Heart left ventricle (tissue), 16 donors: ENCODE measurements at regions of chr15 and their contacts with region 1.

Region 1: GRCh38 chr15:77419836-77420609 is at the start of gene PEAK1:
- DNase-seq: peak; percentile 100
- ATAC-seq: peak; percentile 97 to 99 (median 99)
- H3K4me3 ChIP-seq: peak within 1 kb of the TSS; percentile 67 to 95 (median 92)
- H3K27ac ChIP-seq: peak within 1 kb of the TSS; percentile 82 to 98 (median 96)
- H3K4me1 ChIP-seq: peaks cover 6 to 73% (median 57%) of the 10 kb centered on the region in 12 donors
- H3K27me3 ChIP-seq: no peaks in the 10 kb centered on the region
- CTCF ChIP-seq: no peak
- POLR2A ChIP-seq: peak; percentile 4 to 93
- total RNA-seq, gene PEAK1: 52.8 to 139 (median 104) TPM

Region 2: DNA sequence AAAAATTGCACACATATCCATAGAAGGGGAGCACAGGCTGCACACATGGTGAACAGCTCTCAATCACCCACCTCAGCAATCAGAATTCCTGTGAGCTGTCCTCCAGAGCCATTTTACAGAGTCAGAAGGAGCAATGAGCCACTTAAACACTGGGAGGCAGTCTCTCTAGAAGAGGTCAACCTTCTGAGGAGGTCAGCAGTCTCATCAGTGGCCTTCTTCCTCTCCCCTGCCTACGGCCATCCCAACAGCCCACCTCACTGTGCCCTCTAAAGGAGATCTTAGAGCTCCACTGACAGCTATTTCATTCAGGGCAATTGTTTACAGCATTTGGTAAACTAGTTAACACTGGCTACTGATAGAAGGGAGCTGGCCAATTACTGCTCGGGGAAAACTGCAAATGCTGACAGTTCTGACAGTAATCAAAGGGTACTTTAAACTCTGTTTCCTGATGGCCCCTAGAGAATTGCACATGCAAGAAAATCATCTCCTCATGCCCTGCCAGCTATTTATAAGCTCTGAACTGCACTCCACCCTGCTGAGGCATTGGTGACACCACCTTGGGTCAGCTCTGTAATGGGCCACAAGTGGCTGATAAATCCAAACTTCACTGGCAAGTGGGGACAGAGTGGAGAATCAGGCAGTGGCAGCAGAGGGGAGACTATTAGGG is 307.1 kb before region 1 on chr15:
- intact Hi-C with region 1: loop called in 2 of 10 experiments (anchors 5 to 10 kb)
- DNase-seq: no peak
- ATAC-seq: peak in 3 of 4 donors; percentile 30 to 72 (median 37)
- H3K4me3 ChIP-seq: no peak overlapping the region
- H3K27ac ChIP-seq: peak overlapping the region in 1 of 12 donors; percentile 1
- H3K4me1 ChIP-seq: peaks cover 0 to 34% (median 14%) of the 10 kb centered on the region in 12 donors
- H3K27me3 ChIP-seq: no peaks in the 10 kb centered on the region
- CTCF ChIP-seq: peak in 1 of 12 donors; percentile 12
- POLR2A ChIP-seq: no peak

Region 3: DNA sequence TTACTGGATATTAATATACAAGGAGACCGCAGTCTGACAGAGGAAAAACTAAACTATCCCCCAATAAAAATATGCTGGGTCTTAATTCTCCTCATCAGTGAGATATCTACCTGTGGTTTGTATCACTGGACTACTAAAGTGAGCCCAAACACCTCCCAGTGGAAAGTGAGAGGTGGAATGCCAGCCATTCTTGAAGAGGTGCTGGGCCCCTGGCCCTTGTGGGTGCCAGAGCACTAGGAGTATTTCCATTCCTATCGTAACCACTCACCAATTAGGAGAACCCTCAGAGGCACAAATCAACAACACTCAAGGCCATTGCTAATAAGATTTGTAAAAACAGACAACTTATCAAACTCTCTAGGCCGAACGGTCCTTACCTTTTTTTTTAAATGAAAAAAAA is 227.6 kb before region 1 on chr15:
- intact Hi-C with region 1: loop called in 7 of 10 experiments (anchors 1 to 5 kb)
- DNase-seq: no peak
- ATAC-seq: no peak
- H3K4me3 ChIP-seq: no peak overlapping the region
- H3K27ac ChIP-seq: peak overlapping the region in 1 of 12 donors; percentile 14
- H3K4me1 ChIP-seq: peaks cover 0 to 48% (median 28%) of the 10 kb centered on the region in 12 donors
- H3K27me3 ChIP-seq: no peaks in the 10 kb centered on the region
- CTCF ChIP-seq: no peak
- POLR2A ChIP-seq: no peak

Region 4: GRCh38 chr15:77352887-77353286 is 67.1 kb before region 1 on chr15:
- intact Hi-C with region 1: loop called in 1 of 10 experiments (anchors 5 kb)
- DNase-seq: no peak
- ATAC-seq: no peak
- H3K4me3 ChIP-seq: no peak overlapping the region
- H3K27ac ChIP-seq: no peak overlapping the region
- H3K4me1 ChIP-seq: peaks cover 2 to 60% (median 33%) of the 10 kb centered on the region in 12 donors
- H3K27me3 ChIP-seq: no peaks in the 10 kb centered on the region
- CTCF ChIP-seq: no peak
- POLR2A ChIP-seq: no peak

Region 5: DNA sequence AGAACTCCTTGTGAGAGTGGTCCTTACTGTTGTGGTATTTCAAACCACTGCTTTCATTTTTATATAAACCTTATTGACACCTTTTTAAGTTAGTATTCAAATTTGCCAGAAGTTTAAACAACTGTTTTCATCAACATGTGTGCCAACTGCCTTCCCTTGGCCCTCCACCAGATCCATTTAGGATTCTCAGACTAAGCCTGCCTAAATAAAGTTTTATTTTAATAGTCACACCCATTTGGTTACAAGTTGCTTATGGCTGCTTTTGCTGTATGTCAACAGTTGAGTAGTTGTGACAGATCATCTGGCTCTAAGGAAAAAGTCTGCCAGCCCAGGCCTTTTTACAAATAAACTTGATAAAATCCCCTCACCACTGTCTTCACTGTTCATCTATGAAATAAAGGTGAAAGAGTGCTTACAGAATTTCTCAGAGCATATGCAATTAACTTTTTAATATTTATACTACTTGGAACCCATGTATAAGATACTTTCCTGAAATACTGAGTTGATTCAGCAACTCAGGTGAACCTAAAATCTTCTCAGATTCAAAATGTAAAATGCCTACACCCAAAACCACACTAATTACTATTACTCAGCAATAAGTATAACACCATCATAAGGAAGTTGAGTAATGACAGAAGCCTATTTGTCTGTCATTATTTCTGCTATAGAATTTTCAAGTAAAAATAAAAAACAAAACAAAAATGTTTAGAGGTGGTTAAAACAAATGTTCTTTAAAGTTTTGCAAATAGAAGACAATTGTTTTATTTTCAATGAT is 35.3 kb before region 1 on chr15:
- intact Hi-C with region 1: no loop called
- DNase-seq: no peak
- ATAC-seq: no peak
- H3K4me3 ChIP-seq: no peak overlapping the region
- H3K27ac ChIP-seq: no peak overlapping the region
- H3K4me1 ChIP-seq: peaks cover 0 to 76% (median 51%) of the 10 kb centered on the region in 12 donors
- H3K27me3 ChIP-seq: no peaks in the 10 kb centered on the region
- CTCF ChIP-seq: no peak
- POLR2A ChIP-seq: no peak

Region 6: GRCh38 chr15:77475898-77476297 is 55.9 kb after region 1 on chr15:
- intact Hi-C with region 1: loop called in 2 of 10 experiments (anchors 2 to 5 kb)
- DNase-seq: no peak
- ATAC-seq: no peak
- H3K4me3 ChIP-seq: no peak overlapping the region
- H3K27ac ChIP-seq: peak overlapping the region in 3 of 12 donors; percentile 30 to 75 (median 63)
- H3K4me1 ChIP-seq: peaks cover 0 to 48% (median 7%) of the 10 kb centered on the region in 12 donors
- H3K27me3 ChIP-seq: no peaks in the 10 kb centered on the region
- CTCF ChIP-seq: no peak
- POLR2A ChIP-seq: no peak

Region 7: GRCh38 chr15:77538027-77538451 is 118.0 kb after region 1 on chr15:
- intact Hi-C with region 1: loop called in 3 of 10 experiments (anchors 2 to 5 kb)
- DNase-seq: peak in 1 of 5 donors; percentile 27
- ATAC-seq: no peak
- H3K4me3 ChIP-seq: no peak overlapping the region
- H3K27ac ChIP-seq: peak overlapping the region in 3 of 12 donors; percentile 25 to 30 (median 30)
- H3K4me1 ChIP-seq: peaks cover 4 to 47% (median 38%) of the 10 kb centered on the region in 12 donors
- H3K27me3 ChIP-seq: no peaks in the 10 kb centered on the region
- CTCF ChIP-seq: no peak
- POLR2A ChIP-seq: no peak